CD4-positive, alpha-beta memory T cell (primary cell): ENCODE measurements at regions of chr13 and their contacts with region 1.

Region 1: DNA sequence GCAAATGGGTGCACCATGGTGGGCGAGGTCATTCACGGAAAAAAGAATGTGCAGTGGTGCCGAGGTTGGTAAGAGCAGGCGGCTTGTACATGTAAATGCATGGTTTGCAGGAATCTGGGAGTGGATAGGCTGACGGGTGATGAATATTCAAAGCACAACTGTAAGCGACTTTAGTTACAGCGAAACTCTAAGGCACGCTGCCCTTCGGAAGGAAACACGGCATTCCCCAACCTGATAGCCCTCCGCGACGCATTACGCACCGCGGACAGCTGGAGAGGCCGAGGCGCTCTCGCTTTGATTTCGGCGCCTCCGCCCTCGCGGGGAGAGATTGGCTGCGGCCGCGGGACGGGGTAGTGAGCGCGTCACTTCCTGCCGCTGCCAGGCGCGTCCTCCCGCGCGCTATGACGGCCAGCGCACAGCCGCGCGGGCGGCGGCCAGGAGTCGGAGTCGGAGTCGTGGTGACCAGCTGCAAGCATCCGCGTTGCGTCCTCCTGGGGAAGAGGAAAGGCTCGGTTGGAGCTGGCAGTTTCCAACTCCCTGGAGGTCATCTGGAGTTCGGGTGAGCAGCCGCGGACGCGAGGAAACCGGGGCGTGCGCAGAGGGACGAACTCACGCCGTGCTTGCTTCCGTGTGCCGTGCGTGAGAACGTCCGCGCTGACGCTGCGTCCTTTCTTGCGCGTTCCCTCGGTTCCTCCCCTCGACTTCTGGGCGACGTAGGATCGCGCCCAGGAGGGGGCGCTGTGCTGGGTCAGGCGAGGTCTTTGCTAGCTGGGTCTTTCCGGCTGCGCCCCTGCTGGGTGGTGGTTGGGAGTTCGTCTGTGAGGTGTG is at the start of gene NUDT15:
- DNase-seq: peak; percentile 96 to 97 (median 97)
- H3K4me3 ChIP-seq: peak within 1 kb of the TSS; percentile 83 to 87
- H3K4me3 Mint-ChIP-seq: peak within 1 kb of the TSS; percentile 87 to 96 (median 93)
- H3K27ac ChIP-seq: peak within 1 kb of the TSS; percentile 94
- H3K27ac Mint-ChIP-seq: peak within 1 kb of the TSS; percentile 95 to 99 (median 97)
- H3K4me1 ChIP-seq: peaks cover 24% of the 10 kb centered on the region
- H3K4me1 Mint-ChIP-seq: peaks cover 13 to 32% (median 27%) of the 10 kb centered on the region in 4 donors
- H3K27me3 ChIP-seq: no peaks in the 10 kb centered on the region
- H3K27me3 Mint-ChIP-seq: no peaks in the 10 kb centered on the region
- total RNA-seq, gene NUDT15: 5.6 to 6.3 TPM

Region 2: DNA sequence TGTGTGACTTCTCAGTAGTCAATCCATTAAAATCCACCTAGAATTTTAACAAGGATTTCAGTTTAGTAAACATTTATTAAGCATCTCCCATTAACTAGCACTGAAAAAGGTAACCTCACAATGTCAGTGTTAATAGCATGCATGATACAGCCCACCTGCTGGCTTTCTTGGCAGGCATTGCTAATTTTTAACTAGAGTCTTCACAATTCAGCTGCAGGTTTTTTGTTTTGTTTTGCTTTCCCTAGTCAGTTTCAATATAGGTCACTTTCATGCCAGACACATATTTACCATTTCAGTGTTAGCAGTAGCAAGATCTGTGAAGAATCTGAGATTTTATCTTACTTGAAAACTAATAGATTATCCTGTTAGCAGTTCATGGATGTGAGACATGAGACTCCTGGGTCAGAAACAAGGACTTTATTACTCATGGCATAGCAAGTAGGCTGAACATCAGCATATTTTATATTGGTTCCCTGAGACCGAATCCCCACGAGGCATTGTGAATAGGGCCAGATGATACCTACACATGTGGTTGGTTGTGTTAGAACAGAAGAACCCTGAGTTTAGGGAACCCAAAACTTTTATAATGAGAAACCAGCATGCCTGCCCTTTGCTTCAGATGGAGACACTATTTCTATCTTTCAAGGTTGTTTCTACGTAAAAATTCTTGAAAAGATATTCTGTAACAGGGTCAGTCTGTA is 942.7 kb before region 1 on chr13:
- CTCF ChIA-PET with region 1: no interaction called
- POLR2A ChIA-PET with region 1: no interaction called
- intact Hi-C with region 1: no loop called
- DNase-seq: no peak
- H3K4me3 ChIP-seq: no peak overlapping the region
- H3K4me3 Mint-ChIP-seq: no peak overlapping the region
- H3K27ac ChIP-seq: no peak overlapping the region
- H3K27ac Mint-ChIP-seq: no peak overlapping the region
- H3K4me1 ChIP-seq: no peaks in the 10 kb centered on the region
- H3K4me1 Mint-ChIP-seq: no peaks in the 10 kb centered on the region
- H3K27me3 ChIP-seq: no peaks in the 10 kb centered on the region
- H3K27me3 Mint-ChIP-seq: peaks cover 1 to 2% of the 10 kb centered on the region in 2 donors

Region 3: DNA sequence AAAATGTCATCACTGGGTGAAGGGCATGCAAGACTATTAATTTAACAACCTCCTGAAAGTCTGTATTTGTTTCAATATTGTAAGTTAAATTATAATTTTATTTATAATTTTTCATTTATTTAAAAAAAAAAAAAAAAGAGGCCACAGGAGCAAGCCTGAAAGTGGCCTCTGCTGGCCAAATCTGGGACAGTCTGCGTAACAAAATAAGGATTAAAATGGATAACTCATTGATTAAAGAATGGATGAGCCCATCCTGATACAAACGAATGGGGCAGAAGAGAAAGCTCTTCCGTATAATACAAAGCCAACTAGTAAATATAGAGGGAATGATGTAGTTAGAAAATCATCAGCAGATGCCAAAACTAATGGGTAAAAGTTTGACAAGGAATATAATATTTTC is 72.7 kb before region 1 on chr13:
- CTCF ChIA-PET with region 1: no interaction called
- POLR2A ChIA-PET with region 1: no interaction called
- intact Hi-C with region 1: no loop called
- DNase-seq: no peak
- H3K4me3 ChIP-seq: no peak overlapping the region
- H3K4me3 Mint-ChIP-seq: no peak overlapping the region
- H3K27ac ChIP-seq: no peak overlapping the region
- H3K27ac Mint-ChIP-seq: no peak overlapping the region
- H3K4me1 ChIP-seq: no peaks in the 10 kb centered on the region
- H3K4me1 Mint-ChIP-seq: no peaks in the 10 kb centered on the region
- H3K27me3 ChIP-seq: no peaks in the 10 kb centered on the region
- H3K27me3 Mint-ChIP-seq: no peaks in the 10 kb centered on the region

Region 4: DNA sequence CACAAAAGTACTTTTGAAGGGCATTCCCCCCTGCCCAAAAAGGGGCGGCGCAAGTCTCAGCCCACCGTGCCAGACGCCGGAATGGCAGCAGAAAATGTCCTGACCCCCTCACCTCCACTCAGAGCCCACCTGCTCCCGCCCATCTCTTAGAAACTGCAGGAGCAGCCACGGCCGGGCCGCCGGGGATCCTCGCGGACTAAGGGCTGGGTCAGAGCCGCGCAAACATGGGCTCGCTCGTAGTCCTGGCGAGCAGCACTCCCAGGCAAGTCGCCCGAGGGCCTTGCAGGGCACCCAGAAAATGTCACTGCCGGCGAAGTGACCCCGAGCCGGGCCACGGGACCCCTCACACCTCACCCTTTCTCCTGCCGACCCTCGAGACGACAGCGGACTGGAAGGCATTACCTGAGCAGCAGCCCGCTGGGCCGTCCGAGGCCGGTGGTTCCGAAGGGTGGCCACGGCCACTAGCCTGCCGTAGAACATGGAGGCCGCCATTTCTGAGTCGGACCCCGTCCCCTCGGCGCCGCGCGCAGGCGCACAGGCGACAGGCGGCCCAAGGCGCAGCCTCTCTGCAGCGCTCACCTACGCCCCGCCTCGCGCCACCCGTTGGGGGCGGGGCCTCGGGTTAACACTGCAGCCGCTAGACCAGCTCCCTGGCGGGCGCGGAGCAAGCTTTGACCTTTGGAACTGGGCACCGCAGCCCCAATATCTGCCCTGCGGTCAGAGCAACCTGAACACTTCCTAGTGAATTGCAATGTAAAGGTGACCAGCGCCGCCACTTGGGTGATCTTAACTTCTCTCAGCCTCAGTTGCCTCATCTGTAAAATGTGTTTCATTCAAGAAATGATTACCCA is 36.6 kb before region 1 on chr13 and contains the start of gene SUCLA2:
- CTCF ChIA-PET with region 1: no interaction called
- POLR2A ChIA-PET with region 1: interaction called, 5 read pairs
- intact Hi-C with region 1: loop called (anchors 1 kb)
- DNase-seq: peak; percentile 85 to 89 (median 87)
- H3K4me3 ChIP-seq: peak within 1 kb of the TSS; percentile 85 to 87
- H3K4me3 Mint-ChIP-seq: peak within 1 kb of the TSS; percentile 95 to 97 (median 96)
- H3K27ac ChIP-seq: peak within 1 kb of the TSS; percentile 82
- H3K27ac Mint-ChIP-seq: peak within 1 kb of the TSS; percentile 53 to 97 (median 91)
- H3K4me1 ChIP-seq: peaks cover 30% of the 10 kb centered on the region
- H3K4me1 Mint-ChIP-seq: peaks cover 20 to 43% (median 32%) of the 10 kb centered on the region in 4 donors
- H3K27me3 ChIP-seq: no peaks in the 10 kb centered on the region
- H3K27me3 Mint-ChIP-seq: no peaks in the 10 kb centered on the region
- total RNA-seq, gene SUCLA2: 28.6 to 29.7 TPM

Region 5: DNA sequence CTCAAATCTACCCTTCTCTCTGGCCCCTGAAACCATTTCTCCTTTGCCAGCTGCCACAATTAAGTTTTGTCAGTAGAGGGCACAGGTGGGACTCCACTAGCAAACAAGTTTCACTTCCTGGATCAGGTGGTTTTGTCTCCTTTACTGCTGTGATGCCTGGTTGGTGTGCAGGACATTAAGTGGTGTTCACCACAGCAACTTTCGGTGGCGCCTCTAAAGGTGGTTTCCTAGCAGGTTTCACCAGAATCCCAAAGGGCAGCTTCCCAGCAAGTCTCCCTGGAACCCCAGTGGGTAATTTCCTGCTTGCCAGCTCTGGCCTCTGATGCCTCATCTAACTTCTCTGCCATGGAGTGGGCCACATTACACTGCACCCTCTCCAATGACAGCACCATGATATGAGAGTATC is 40.7 kb after region 1 on chr13:
- CTCF ChIA-PET with region 1: interaction called, 10 read pairs
- POLR2A ChIA-PET with region 1: interaction called, 3 read pairs
- intact Hi-C with region 1: no loop called
- DNase-seq: peak in 3 of 5 donors; percentile 11 to 18 (median 17)
- H3K4me3 ChIP-seq: no peak overlapping the region
- H3K4me3 Mint-ChIP-seq: no peak overlapping the region
- H3K27ac ChIP-seq: no peak overlapping the region
- H3K27ac Mint-ChIP-seq: no peak overlapping the region
- H3K4me1 ChIP-seq: no peaks in the 10 kb centered on the region
- H3K4me1 Mint-ChIP-seq: peaks cover 0 to 8% (median 0%) of the 10 kb centered on the region in 4 donors
- H3K27me3 ChIP-seq: no peaks in the 10 kb centered on the region
- H3K27me3 Mint-ChIP-seq: no peaks in the 10 kb centered on the region

Region 6: GRCh38 chr13:48175185-48175584 is 137.6 kb after region 1 on chr13:
- CTCF ChIA-PET with region 1: no interaction called
- POLR2A ChIA-PET with region 1: no interaction called
- intact Hi-C with region 1: no loop called
- DNase-seq: no peak
- H3K4me3 ChIP-seq: no peak overlapping the region
- H3K4me3 Mint-ChIP-seq: no peak overlapping the region
- H3K27ac ChIP-seq: no peak overlapping the region
- H3K27ac Mint-ChIP-seq: no peak overlapping the region
- H3K4me1 ChIP-seq: no peaks in the 10 kb centered on the region
- H3K4me1 Mint-ChIP-seq: peaks cover 0 to 2% (median 0%) of the 10 kb centered on the region in 4 donors
- H3K27me3 ChIP-seq: no peaks in the 10 kb centered on the region
- H3K27me3 Mint-ChIP-seq: no peaks in the 10 kb centered on the region

Region 7: GRCh38 chr13:48233046-48233907 is 195.7 kb after region 1 on chr13 and contains the start of gene ITM2B:
- CTCF ChIA-PET with region 1: interaction called, 9 read pairs
- POLR2A ChIA-PET with region 1: interaction called, 9 read pairs
- intact Hi-C with region 1: loop called (anchors 2 kb)
- DNase-seq: peak; percentile 72 to 79 (median 76)
- H3K4me3 ChIP-seq: peak within 1 kb of the TSS; percentile 68 to 92
- H3K4me3 Mint-ChIP-seq: peak within 1 kb of the TSS; percentile 95 to 99 (median 98)
- H3K27ac ChIP-seq: peak within 1 kb of the TSS; percentile 98
- H3K27ac Mint-ChIP-seq: peak within 1 kb of the TSS; percentile 93 to 99 (median 98)
- H3K4me1 ChIP-seq: peaks cover 45% of the 10 kb centered on the region
- H3K4me1 Mint-ChIP-seq: peaks cover 37 to 69% (median 46%) of the 10 kb centered on the region in 4 donors
- H3K27me3 ChIP-seq: no peaks in the 10 kb centered on the region
- H3K27me3 Mint-ChIP-seq: no peaks in the 10 kb centered on the region
- total RNA-seq, gene ITM2B: 653 to 670 TPM

Region 8: GRCh38 chr13:48769107-48769704 is 731.6 kb after region 1 on chr13:
- CTCF ChIA-PET with region 1: interaction called, 14 read pairs
- POLR2A ChIA-PET with region 1: no interaction called
- intact Hi-C with region 1: loop called (anchors 1 kb)
- DNase-seq: peak; percentile 83 to 85 (median 85)
- H3K4me3 ChIP-seq: no peak overlapping the region
- H3K4me3 Mint-ChIP-seq: peak overlapping the region in 1 of 8 donors; percentile 11
- H3K27ac ChIP-seq: no peak overlapping the region
- H3K27ac Mint-ChIP-seq: peak overlapping the region in 2 of 7 donors; percentile 5 to 58
- H3K4me1 ChIP-seq: no peaks in the 10 kb centered on the region
- H3K4me1 Mint-ChIP-seq: peaks cover 3 to 15% (median 5%) of the 10 kb centered on the region in 4 donors
- H3K27me3 ChIP-seq: no peaks in the 10 kb centered on the region
- H3K27me3 Mint-ChIP-seq: peaks cover 6 to 8% of the 10 kb centered on the region in 2 donors

Region 9: DNA sequence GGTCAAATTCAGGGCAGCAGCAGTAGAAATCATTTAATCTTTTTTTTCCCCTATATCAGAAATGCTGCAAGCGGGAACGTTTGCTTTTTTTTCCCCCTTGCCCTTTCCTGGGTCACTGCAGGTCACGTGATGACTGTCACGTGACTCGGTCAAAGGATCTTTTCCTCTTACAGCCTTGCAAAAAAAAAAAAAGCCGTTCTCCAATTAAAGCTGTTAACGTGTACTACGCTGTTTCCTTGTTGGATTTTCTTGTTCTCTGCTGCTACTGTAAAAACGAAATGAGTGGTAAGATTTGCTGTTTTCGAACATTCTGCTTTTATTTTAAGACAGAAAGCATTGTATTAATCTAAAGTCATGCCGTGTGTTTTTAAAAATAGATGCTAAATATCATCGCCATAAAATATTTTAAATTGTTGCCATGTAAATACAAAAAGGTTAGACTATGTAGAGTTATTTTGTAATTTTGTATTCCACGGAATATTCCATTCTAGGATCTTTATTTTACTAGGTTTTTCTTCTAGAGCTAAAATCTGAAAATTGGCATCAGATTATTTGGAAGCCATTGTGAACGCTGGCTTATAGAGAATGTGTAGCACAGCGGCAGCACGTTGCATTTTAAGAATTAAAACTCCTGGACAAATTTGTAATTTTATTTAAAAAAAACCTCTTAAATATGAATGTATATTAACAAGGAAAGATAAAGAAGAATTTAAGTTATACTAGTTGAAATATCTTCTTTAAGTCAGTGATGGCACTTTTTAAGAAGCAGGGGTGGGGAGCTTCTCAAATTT is 1072.8 kb after region 1 on chr13:
- CTCF ChIA-PET with region 1: no interaction called
- POLR2A ChIA-PET with region 1: no interaction called
- intact Hi-C with region 1: loop called (anchors 10 kb)
- DNase-seq: peak; percentile 72 to 80 (median 75)
- H3K4me3 ChIP-seq: peak overlapping the region; percentile 76 to 78
- H3K4me3 Mint-ChIP-seq: peak overlapping the region; percentile 86 to 94 (median 92)
- H3K27ac ChIP-seq: peak overlapping the region; percentile 65
- H3K27ac Mint-ChIP-seq: peak overlapping the region; percentile 84 to 95 (median 92)
- H3K4me1 ChIP-seq: peaks cover 40% of the 10 kb centered on the region
- H3K4me1 Mint-ChIP-seq: peaks cover 24 to 46% (median 29%) of the 10 kb centered on the region in 4 donors
- H3K27me3 ChIP-seq: no peaks in the 10 kb centered on the region
- H3K27me3 Mint-ChIP-seq: no peaks in the 10 kb centered on the region